Aorta (tissue), 5 donors: ENCODE measurements at regions of chr11 and their contacts with region 1.

Region 1: GRCh38 chr11:6443269-6444003 is 2.6 kb upstream of the HPX start:
- DNase-seq: peak; percentile 58 to 78
- ATAC-seq: peak; percentile 82
- H3K4me3 ChIP-seq: no peak overlapping the region
- H3K27ac ChIP-seq: no peak overlapping the region
- H3K4me1 ChIP-seq: no peaks in the 10 kb centered on the region
- H3K27me3 ChIP-seq: no peaks in the 10 kb centered on the region

Region 2: DNA sequence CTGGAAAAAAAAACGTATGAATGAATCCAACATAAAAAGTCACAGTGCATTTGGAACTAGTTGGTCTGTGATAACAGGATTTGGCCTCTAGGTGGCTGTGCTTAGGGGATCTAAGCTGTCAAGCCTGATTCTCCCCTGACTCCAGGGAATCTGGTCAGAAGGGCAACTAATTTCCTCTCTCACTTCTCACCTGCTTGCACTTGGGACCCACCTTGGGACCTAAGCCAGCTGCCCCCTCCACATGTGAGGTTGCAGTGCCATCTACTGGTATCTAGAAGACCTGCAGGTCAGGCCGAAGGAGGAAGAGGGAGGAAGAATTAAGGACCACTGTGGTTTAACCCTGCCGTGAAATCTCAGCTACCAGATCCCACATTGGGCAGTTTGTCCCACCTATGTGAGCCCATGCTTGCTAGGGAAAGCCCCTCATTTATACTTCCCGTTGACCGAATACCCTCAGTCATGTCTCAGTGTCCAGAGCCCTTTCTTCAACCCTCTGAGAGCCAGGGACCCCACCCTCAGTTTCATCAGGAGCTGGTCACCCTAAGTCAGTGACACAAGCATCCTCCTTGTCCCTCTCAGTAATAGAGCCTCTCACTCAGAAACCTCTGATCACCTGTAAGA is 90.0 kb before region 1 on chr11:
- intact Hi-C with region 1: no loop called
- DNase-seq: no peak
- ATAC-seq: peak; percentile 81
- H3K4me3 ChIP-seq: no peak overlapping the region
- H3K27ac ChIP-seq: no peak overlapping the region
- H3K4me1 ChIP-seq: no peaks in the 10 kb centered on the region
- H3K27me3 ChIP-seq: no peaks in the 10 kb centered on the region

Region 3: GRCh38 chr11:6377902-6378639 is 65.4 kb before region 1 on chr11:
- intact Hi-C with region 1: loop called (anchors 2 to 5 kb)
- DNase-seq: no peak
- ATAC-seq: peak; percentile 41
- H3K4me3 ChIP-seq: no peak overlapping the region
- H3K27ac ChIP-seq: no peak overlapping the region
- H3K4me1 ChIP-seq: no peaks in the 10 kb centered on the region
- H3K27me3 ChIP-seq: no peaks in the 10 kb centered on the region

Region 4: DNA sequence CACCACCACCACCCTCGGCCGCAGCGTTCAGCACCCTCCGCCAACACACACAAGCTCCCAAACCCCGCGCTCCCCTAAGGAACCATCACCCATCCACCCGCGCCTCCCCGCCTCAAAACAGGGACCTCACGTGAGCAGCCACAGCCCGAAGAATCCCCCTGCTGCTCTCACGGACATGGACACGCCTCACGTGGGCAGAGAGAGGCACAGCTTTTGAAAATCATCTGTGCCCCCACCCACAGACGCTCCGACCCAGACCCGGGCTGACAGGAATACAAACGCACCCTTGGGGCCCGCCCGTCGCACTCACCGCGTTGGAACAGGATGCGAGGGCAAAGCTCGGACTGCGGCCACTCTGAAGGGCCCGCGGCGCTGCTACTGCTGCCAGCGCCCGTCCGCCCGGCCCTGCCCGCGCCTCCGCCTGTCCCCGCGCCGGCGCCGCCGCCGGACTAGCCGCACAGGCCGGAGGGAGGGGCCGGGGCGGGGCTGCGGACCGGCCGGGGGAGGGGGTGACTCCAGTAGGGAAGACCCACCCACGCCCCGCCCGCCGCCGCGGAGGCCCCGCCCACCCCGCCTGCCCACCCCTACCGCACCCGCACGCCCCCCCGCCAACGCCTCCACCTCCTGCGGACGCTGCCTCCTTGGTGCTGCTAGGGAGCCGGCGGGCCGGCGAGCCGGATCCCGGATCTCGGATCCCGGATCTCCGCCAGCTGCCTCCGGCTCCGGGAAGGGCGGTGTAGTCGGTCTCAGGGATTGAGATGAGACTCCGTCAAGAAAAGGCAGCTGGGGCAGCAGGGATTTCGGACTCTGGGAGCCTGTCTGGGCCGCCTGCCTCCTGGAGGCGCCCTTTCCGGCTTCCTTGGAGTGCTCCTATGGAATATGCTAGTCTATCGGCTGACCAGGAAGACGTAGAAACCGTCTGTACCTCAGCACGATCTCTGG is 30.3 kb after region 1 on chr11 and contains the start of gene TRIM3:
- intact Hi-C with region 1: loop called in 1 of 2 experiments (anchors 5 kb)
- DNase-seq: peak; percentile 95 to 99
- ATAC-seq: peak; percentile 93
- H3K4me3 ChIP-seq: peak within 1 kb of the TSS; percentile 57 to 68
- H3K27ac ChIP-seq: peak within 1 kb of the TSS; percentile 62 to 90
- H3K4me1 ChIP-seq: no peaks in the 10 kb centered on the region
- H3K27me3 ChIP-seq: no peaks in the 10 kb centered on the region
- total RNA-seq, gene TRIM3: 28.6 to 35.5 TPM

Region 5: DNA sequence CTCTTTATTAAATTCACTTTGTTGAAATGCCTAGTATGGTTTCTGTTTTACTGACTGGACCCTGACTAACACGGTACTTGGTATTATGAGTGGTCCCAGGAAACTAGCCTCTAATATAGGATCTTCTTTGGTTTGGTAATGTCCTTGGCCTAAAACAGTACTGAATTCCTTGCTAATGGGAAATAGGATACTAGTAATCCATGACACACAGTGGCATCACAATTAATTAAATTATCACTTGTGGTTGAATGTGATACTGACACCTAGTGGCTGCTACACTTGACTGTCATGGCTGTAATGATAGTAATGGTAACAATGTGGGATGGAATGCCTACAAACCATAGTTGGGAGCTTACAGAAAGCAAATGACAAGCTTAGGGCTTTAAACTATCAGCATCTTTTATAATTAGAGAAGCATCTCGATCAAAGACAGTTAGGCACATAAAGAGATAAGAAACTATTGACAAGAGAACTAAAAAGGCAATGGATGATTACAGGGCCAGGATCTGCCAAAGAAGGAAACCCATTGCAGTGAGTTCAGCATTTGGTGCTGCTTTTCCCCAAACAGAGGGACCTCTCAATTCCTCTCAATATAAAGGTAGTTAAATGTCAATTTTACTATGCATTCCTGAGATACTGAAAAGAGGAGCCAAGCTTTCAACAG is 62.3 kb after region 1 on chr11:
- intact Hi-C with region 1: loop called in 1 of 2 experiments (anchors 5 kb)
- DNase-seq: no peak
- ATAC-seq: no peak
- H3K4me3 ChIP-seq: no peak overlapping the region
- H3K27ac ChIP-seq: no peak overlapping the region
- H3K4me1 ChIP-seq: no peaks in the 10 kb centered on the region
- H3K27me3 ChIP-seq: no peaks in the 10 kb centered on the region

Region 6: DNA sequence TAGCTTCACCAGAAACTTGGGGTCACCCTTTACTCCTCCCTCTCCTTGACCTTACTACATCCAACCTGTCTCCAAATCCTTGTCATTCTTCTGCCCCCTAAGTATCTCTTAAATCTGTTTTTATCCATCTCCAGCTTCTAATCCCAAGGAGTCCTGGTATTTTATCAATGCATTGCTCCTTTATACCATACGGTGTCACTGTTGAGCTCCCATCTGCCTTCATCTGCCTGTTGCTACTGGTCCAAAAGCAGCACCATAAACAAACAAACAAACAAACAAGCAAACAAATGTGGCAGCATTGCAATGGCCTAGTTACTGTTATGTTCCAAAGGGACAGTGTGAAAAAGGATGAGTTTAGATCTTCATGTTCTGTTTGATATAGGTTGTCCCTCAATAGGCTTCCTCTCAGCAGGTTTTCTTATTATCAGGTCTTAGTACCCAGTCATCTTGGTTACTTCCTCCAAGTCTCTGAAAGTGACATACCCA is 87.9 kb after region 1 on chr11:
- intact Hi-C with region 1: no loop called
- DNase-seq: no peak
- ATAC-seq: no peak
- H3K4me3 ChIP-seq: no peak overlapping the region
- H3K27ac ChIP-seq: no peak overlapping the region
- H3K4me1 ChIP-seq: no peaks in the 10 kb centered on the region
- H3K27me3 ChIP-seq: no peaks in the 10 kb centered on the region